ENCODE measurements at regions of chr22 and their contacts with region 1.

Region 1: GRCh38 chr22:36398621-36399469 is 11.1 kb upstream of the MYH9 start:
- DNase-seq: no peak
- ATAC-seq: peak in 2 of 8 donors; percentile 17 to 26
- H3K4me3 ChIP-seq: no peak overlapping the region
- H3K27ac ChIP-seq: peak overlapping the region in 1 of 10 donors; percentile 35
- H3K4me1 ChIP-seq: peaks cover 0 to 60% (median 5%) of the 10 kb centered on the region in 9 donors
- H3K27me3 ChIP-seq: no peaks in the 10 kb centered on the region
- CTCF ChIP-seq: no peak

Region 2: DNA sequence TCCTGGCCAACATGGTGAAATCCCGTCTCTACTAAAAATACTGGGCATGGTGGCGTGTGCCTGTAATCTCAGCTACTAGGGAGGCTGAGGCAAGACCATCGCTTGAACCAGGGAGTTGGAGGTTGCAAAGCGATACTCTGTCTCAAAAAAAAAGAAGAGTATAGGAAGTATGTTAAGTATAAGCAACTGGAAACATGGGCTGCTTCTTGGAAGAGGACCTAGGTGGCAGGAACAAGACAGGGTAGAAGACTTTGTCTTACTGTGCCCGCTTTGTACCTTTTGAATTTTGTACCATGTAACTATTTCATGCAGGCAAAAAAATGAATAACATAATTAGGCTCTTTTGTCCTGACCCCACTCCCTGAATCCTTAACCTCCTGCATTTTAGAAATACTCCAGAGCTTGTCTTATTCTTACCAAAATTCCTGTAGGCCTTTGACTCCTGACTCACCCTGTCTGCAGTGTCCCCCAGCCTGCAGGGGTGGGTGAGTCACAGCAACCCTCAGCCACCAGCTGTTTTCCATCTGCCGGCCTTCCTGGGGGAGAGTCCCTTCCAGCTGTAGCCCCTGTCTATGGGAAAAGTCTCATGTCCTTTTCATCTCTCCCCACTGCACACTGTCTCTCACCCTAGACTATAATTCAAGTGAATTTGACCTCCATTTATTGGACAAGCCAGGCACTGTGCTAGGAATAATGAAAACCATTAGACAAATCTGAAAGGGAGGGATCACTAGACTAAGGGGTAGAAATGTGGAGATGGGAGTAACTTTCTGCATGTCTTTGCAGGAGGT is 40.8 kb after region 1 on chr22:
- intact Hi-C with region 1: loop called in 3 of 10 experiments (anchors 10 kb)
- DNase-seq: peak; percentile 68 to 74
- ATAC-seq: peak; percentile 78 to 97 (median 88)
- H3K4me3 ChIP-seq: no peak overlapping the region
- H3K27ac ChIP-seq: peak overlapping the region in 8 of 10 donors; percentile 46 to 75 (median 52)
- H3K4me1 ChIP-seq: peaks cover 0 to 68% (median 12%) of the 10 kb centered on the region in 9 donors
- H3K27me3 ChIP-seq: no peaks in the 10 kb centered on the region
- CTCF ChIP-seq: no peak

Measured in heart right ventricle (tissue), 16 donors.